ENCODE measurements at regions of chr2 and their contacts with region 1.

Region 1: DNA sequence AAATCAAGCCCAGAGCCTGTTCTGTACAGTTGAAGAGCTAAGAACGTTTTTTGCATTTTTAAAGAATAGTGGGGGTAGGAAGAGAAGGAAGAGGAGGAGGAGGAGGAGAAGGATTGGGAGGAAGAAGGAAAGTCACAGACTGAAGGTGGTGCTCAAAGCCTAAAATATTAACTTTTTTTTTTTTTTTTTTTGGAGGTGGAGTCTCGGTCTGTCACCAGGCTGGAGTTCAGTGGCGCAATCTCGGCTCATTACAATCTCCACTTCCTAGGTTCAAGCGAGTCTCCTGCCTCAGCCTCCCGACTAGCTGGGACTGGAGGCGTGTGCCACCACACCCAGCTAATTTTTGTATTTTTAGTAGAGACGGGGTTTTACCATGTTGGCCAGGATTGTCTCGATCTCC is 18.3 kb upstream of the KLHL29 start:
- DNase-seq: no peak
- H3K4me3 ChIP-seq: no peak overlapping the region
- H3K27ac ChIP-seq: no peak overlapping the region
- H3K4me1 ChIP-seq: no peaks in the 10 kb centered on the region
- H3K27me3 ChIP-seq: peaks cover 1% of the 10 kb centered on the region
- CTCF ChIP-seq: no peak

Region 2: GRCh38 chr2:22756276-22757043 is 610.3 kb before region 1 on chr2:
- CTCF ChIA-PET with region 1: no interaction called
- dilution Hi-C with region 1: no loop called
- in situ Hi-C with region 1: no loop called
- intact Hi-C with region 1: no loop called
- DNase-seq: no peak
- H3K4me3 ChIP-seq: no peak overlapping the region
- H3K27ac ChIP-seq: no peak overlapping the region
- H3K4me1 ChIP-seq: no peaks in the 10 kb centered on the region
- H3K27me3 ChIP-seq: no peaks in the 10 kb centered on the region
- CTCF ChIP-seq: no peak

Region 3: DNA sequence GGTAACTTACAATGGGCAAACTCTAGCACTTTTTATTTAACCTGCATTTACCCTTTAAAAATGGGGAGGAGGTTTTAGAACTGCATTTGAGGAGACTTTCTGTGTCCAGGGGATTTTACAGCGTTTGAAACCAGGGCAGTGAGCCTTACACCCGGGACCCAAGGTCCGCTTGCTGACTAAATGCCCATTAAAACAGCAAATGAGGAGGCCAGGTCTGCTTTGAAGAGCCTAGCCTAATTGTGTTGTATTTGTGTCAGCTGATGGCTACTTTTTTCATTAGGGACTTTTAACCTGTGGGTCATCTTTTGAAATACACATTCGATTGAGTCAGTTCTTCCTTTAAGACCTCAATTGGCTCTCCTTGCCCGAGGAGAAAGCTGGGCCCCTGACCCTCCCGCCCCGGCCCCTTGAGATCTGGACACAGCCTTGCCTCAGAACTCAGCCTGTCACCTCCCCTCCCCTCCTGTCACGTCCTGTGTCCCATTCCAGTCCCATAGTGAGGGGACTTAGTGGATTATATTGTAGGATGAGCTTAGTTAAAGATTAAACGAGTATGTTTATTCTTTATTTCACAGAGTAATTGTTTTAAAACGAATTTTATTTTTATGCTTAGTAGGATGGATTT is 87.2 kb after region 1 on chr2:
- CTCF ChIA-PET with region 1: interaction called, 49 read pairs
- dilution Hi-C with region 1: no loop called
- in situ Hi-C with region 1: no loop called
- intact Hi-C with region 1: no loop called
- DNase-seq: no peak
- H3K4me3 ChIP-seq: no peak overlapping the region
- H3K27ac ChIP-seq: no peak overlapping the region
- H3K4me1 ChIP-seq: peaks cover 9% of the 10 kb centered on the region
- H3K27me3 ChIP-seq: no peaks in the 10 kb centered on the region
- CTCF ChIP-seq: no peak

Region 4: GRCh38 chr2:23595601-23596251 is 229.0 kb after region 1 on chr2:
- CTCF ChIA-PET with region 1: interaction called, 15 read pairs
- dilution Hi-C with region 1: no loop called
- in situ Hi-C with region 1: no loop called
- intact Hi-C with region 1: no loop called
- DNase-seq: peak; percentile 19
- H3K4me3 ChIP-seq: no peak overlapping the region
- H3K27ac ChIP-seq: no peak overlapping the region
- H3K4me1 ChIP-seq: peaks cover 7% of the 10 kb centered on the region
- H3K27me3 ChIP-seq: no peaks in the 10 kb centered on the region
- CTCF ChIP-seq: no peak

Measured in mammary epithelial cell (primary cell).